ENCODE measurements at regions of chr7 and their contacts with region 1.

Region 1: DNA sequence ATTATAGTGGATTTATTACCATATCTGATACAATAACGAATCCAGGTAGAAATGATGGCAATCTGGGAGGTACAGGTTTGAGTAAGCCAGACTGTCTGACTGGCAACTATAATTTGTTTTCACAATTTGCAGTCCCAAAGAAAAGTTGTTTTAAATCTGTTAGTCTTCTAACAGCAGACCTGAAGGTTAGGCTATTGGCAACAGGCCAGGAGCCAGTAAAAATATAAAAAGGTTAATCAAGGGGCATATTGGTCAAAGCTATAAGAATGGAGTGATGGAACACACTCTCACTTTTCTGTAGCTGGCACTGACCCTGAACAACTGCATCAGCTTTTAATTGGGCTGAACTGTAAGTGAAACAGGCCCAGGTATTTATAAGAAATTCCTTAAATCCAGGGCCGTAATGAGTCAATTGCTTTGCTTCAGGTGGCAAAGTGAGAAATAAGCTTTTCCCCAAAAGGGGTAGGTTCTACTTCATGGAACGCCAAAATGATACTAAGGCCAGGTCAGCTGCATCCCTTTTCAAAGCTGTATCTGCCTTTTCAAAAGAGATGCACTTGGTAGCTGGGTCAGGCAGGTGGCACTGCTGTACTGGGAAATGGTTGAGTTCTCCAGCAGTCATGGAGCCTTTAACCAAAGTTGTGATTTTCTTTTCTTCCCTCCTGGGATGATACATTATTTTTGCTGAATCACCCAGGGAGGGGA is 7.0 kb upstream of the GPR22 start:
- DNase-seq: peak; percentile 79
- ATAC-seq: peak; percentile 99
- H3K4me3 ChIP-seq: no peak overlapping the region
- H3K27ac ChIP-seq: no peak overlapping the region
- H3K4me1 ChIP-seq: no peaks in the 10 kb centered on the region
- H3K27me3 ChIP-seq: no peaks in the 10 kb centered on the region
- CTCF ChIP-seq: peak; percentile 96
- POLR2A ChIP-seq: peak; percentile 49; the same call in 1 of the 2 replicates
- RAD21 ChIP-seq: peak; percentile 98

Region 2: GRCh38 chr7:107579885-107580715 is 117.2 kb after region 1 on chr7 and contains the start of gene BCAP29:
- CTCF ChIA-PET with region 1: no interaction called
- POLR2A ChIA-PET with region 1: no interaction called
- dilution Hi-C with region 1: no loop called
- in situ Hi-C with region 1: no loop called
- intact Hi-C with region 1: loop called (anchors 5 kb)
- DNase-seq: peak; percentile 25
- ATAC-seq: peak; percentile 98
- H3K4me3 ChIP-seq: peak within 1 kb of the TSS; percentile 93
- H3K27ac ChIP-seq: peak within 1 kb of the TSS; percentile 74
- H3K4me1 ChIP-seq: no peaks in the 10 kb centered on the region
- H3K27me3 ChIP-seq: no peaks in the 10 kb centered on the region
- CTCF ChIP-seq: 0 out of 2 replicates have a peak, but pooled peaks have one; percentile 9
- POLR2A ChIP-seq: peak; percentile 80
- RAD21 ChIP-seq: no peak
- total RNA-seq, gene BCAP29: 33.0 and 119 TPM in 2 replicates

Region 3: DNA sequence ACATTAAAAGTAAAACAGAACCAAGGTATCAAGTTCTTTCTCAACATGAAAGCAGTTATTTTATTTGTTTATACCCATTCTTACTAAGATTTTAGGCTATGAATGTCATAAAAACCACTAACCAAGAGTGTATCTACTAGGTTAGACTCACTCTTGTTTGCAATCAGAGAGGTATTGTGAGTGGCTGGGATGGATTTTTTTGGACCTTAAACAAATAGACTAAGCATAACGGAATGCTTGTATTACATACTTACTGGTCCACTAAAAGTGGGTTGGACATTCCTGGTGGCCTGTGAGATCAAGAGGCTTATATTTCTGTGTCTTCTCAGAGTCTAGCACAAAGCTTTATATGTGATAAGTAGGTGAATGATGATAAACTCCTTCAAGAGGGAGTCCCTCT is 248.4 kb after region 1 on chr7:
- CTCF ChIA-PET with region 1: no interaction called
- POLR2A ChIA-PET with region 1: no interaction called
- dilution Hi-C with region 1: loop called (anchors 25 kb)
- in situ Hi-C with region 1: no loop called
- intact Hi-C with region 1: no loop called
- DNase-seq: peak; percentile 85
- ATAC-seq: peak; percentile 91
- H3K4me3 ChIP-seq: no peak overlapping the region
- H3K27ac ChIP-seq: no peak overlapping the region
- H3K4me1 ChIP-seq: peaks cover 2% of the 10 kb centered on the region; the same call in 1 of the 2 replicates
- H3K27me3 ChIP-seq: no peaks in the 10 kb centered on the region
- CTCF ChIP-seq: no peak
- POLR2A ChIP-seq: no peak
- RAD21 ChIP-seq: no peak

Region 4: GRCh38 chr7:107725151-107725740 is 262.4 kb after region 1 on chr7:
- CTCF ChIA-PET with region 1: interaction called, 7 read pairs
- POLR2A ChIA-PET with region 1: no interaction called
- dilution Hi-C with region 1: loop called (anchors 25 kb)
- in situ Hi-C with region 1: loop called (anchors 5 kb)
- intact Hi-C with region 1: loop called (anchors 1 kb)
- DNase-seq: peak; percentile 68
- ATAC-seq: no peak
- H3K4me3 ChIP-seq: no peak overlapping the region
- H3K27ac ChIP-seq: no peak overlapping the region
- H3K4me1 ChIP-seq: peaks cover 3% of the 10 kb centered on the region; the same call in 1 of the 2 replicates
- H3K27me3 ChIP-seq: peaks cover 4% of the 10 kb centered on the region
- CTCF ChIP-seq: peak; percentile 71
- POLR2A ChIP-seq: no peak
- RAD21 ChIP-seq: peak; percentile 76

Region 5: GRCh38 chr7:107743567-107744344 is 280.9 kb after region 1 on chr7 and contains the start of gene CBLL1:
- CTCF ChIA-PET with region 1: interaction called, 3 read pairs
- POLR2A ChIA-PET with region 1: no interaction called
- dilution Hi-C with region 1: no loop called
- in situ Hi-C with region 1: no loop called
- intact Hi-C with region 1: loop called (anchors 1 kb)
- DNase-seq: peak; percentile 94
- ATAC-seq: peak; percentile 98
- H3K4me3 ChIP-seq: peak within 1 kb of the TSS; percentile 87
- H3K27ac ChIP-seq: peak within 1 kb of the TSS; percentile 93
- H3K4me1 ChIP-seq: peaks cover 8% of the 10 kb centered on the region
- H3K27me3 ChIP-seq: no peaks in the 10 kb centered on the region
- CTCF ChIP-seq: peak; percentile 85
- POLR2A ChIP-seq: peak; percentile 79
- RAD21 ChIP-seq: peak; percentile 59
- total RNA-seq, gene CBLL1: 15.6 and 20.3 TPM in 2 replicates

Region 6: DNA sequence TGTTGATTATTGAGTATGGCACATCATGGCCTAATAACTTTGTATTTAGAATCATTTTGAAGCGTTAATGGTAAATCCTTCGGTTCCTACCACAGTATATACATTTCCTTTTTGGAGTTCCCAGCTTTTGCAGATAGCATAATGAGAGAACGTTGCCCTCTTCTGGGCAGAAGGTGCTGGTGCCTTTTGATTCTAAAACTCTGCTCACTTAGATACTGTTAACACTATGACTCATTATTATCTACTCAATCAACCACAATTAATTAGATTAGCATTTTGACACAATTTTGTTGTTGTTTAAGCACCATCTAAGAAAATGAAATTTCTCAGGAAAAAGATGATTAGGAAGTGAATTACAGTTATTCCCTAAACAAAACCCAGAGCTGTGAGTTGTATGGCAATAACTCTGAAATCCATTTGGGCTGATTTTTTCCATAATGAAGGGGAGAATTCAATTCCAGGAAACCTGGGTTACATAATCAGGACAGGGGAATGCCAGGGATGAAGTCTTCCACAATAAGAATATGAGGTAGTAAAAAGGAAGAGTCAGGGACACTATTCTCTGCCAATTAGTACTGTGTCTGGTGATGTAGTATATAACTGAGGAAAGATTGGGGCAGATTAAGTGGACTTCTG is 416.6 kb after region 1 on chr7:
- CTCF ChIA-PET with region 1: interaction called, 12 read pairs
- POLR2A ChIA-PET with region 1: no interaction called
- dilution Hi-C with region 1: no loop called
- in situ Hi-C with region 1: loop called (anchors 5 kb)
- intact Hi-C with region 1: loop called (anchors 1 kb)
- DNase-seq: peak; percentile 69
- ATAC-seq: peak; percentile 92
- H3K4me3 ChIP-seq: no peak overlapping the region
- H3K27ac ChIP-seq: no peak overlapping the region
- H3K4me1 ChIP-seq: no peaks in the 10 kb centered on the region
- H3K27me3 ChIP-seq: peaks cover 13% of the 10 kb centered on the region
- CTCF ChIP-seq: peak; percentile 84
- POLR2A ChIP-seq: no peak
- RAD21 ChIP-seq: peak; percentile 75